ENCODE measurements at regions of chr2 and their contacts with region 1.

Region 1: DNA sequence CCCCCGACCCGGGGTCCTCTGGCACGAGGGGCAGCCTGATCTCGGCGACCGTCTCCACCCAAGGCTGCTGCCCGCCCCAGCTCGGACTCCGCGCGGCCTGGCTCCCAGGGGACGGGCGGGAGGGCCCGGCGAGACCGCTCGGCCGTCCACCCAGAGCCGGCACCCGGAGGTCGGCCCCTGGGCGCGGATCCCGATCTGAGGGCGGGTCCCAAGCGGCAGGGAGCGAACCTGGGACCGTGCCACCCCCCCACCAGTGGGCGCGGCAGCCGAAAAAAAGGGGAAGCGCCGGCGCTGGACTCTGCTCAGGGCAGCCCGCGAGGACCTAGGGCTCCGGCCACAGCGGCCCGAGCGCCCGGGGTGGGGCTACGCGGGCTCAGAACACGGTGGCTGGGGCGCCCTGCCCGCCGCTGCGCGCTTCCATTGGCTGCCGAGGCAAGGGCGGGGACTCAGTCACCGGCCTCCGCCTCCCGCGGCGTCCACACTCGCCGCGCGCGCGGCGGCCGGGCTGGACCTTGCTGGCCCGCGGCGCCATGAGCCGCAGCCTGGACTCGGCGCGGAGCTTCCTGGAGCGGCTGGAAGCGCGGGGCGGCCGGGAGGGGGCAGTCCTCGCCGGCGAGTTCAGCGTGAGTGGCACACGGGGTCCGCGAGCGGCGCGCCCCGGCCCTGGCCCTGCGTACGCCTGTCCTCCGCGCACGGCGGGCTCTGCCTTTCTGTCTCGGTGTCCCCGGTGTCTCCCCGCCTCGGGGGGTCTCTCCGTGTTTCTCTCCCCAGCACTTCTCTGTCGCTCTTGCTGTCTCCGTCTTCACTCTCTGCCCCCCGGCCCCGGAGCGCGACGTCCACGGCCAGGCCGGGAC is at the start of gene PTPN18:
- DNase-seq: peak; percentile 87
- ATAC-seq: peak; percentile 95
- H3K4me3 ChIP-seq: peak within 1 kb of the TSS; percentile 74 to 97 (median 94)
- H3K27ac ChIP-seq: peak within 1 kb of the TSS; percentile 73
- H3K4me1 ChIP-seq: peaks cover 30% of the 10 kb centered on the region
- H3K27me3 ChIP-seq: no peaks in the 10 kb centered on the region; a peak in 1 of 5 replicates
- CTCF ChIP-seq: peak; percentile 72
- EP300 ChIP-seq: peak in 1 of 2 experiments; percentile 12; a peak in 1 of 4 replicates
- POLR2A ChIP-seq: peak; percentile 91 to 93
- RAD21 ChIP-seq: peak; percentile 82
- total RNA-seq, gene PTPN18: 10.8 and 14.8 TPM in 2 replicates

Region 2: GRCh38 chr2:130303169-130303568 is 52.6 kb before region 1 on chr2:
- CTCF ChIA-PET with region 1: no interaction called
- POLR2A ChIA-PET with region 1: no interaction called
- in situ Hi-C with region 1: no loop called
- intact Hi-C with region 1: no loop called
- DNase-seq: no peak
- ATAC-seq: no peak
- H3K4me3 ChIP-seq: no peak overlapping the region
- H3K27ac ChIP-seq: no peak overlapping the region
- H3K4me1 ChIP-seq: no peaks in the 10 kb centered on the region
- H3K27me3 ChIP-seq: peaks cover 4 to 6% of the 10 kb centered on the region in 2 experiments; a peak in 4 of 5 replicates
- CTCF ChIP-seq: no peak
- EP300 ChIP-seq: no peak
- POLR2A ChIP-seq: no peak
- RAD21 ChIP-seq: no peak

Region 3: GRCh38 chr2:130391058-130391871 is 35.5 kb after region 1 on chr2:
- CTCF ChIA-PET with region 1: no interaction called
- POLR2A ChIA-PET with region 1: interaction called, 3 read pairs
- in situ Hi-C with region 1: no loop called
- intact Hi-C with region 1: loop called (anchors 5 kb)
- DNase-seq: peak; percentile 55
- ATAC-seq: peak; percentile 93
- H3K4me3 ChIP-seq: peak overlapping the region; percentile 75 to 82 (median 78)
- H3K27ac ChIP-seq: peak overlapping the region; percentile 36
- H3K4me1 ChIP-seq: peaks cover 31% of the 10 kb centered on the region
- H3K27me3 ChIP-seq: peaks cover 2 to 13% of the 10 kb centered on the region in 2 experiments; a peak in 2 of 5 replicates
- CTCF ChIP-seq: no peak
- EP300 ChIP-seq: no peak
- POLR2A ChIP-seq: peak; percentile 39 to 79; a peak in 3 of 4 replicates
- RAD21 ChIP-seq: 0 out of 2 replicates have a peak, but pooled peaks have one; percentile 6

Region 4: DNA sequence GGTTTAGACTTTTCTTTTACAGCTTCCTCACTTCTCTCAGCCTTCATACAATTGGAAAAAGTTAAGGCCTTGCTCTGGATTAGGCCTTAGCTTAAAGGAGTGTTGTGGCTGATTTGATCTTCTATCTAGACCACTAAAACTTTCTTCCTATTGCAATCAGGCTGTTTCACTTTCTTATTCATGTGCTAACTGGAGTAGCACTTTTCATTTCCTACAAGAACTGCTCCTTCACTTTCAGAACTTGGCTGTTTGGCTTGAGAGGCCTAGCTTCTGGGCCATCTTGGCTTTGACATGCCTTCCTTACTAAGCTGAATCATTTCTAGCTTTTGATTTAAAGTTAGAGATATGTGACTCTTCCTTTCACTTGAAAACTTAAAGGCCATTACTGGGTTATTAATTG is 595.2 kb after region 1 on chr2:
- CTCF ChIA-PET with region 1: no interaction called
- POLR2A ChIA-PET with region 1: no interaction called
- in situ Hi-C with region 1: no loop called
- intact Hi-C with region 1: no loop called
- DNase-seq: no peak
- ATAC-seq: no peak
- H3K4me3 ChIP-seq: no peak overlapping the region
- H3K27ac ChIP-seq: no peak overlapping the region
- H3K4me1 ChIP-seq: no peaks in the 10 kb centered on the region
- H3K27me3 ChIP-seq: peaks cover 1 to 8% of the 10 kb centered on the region in 2 experiments; a peak in 2 of 5 replicates
- CTCF ChIP-seq: no peak
- EP300 ChIP-seq: no peak
- POLR2A ChIP-seq: no peak
- RAD21 ChIP-seq: no peak